Heart left ventricle (tissue), 16 donors: ENCODE measurements at regions of chr14 and their contacts with region 1.

Region 1: GRCh38 chr14:92039719-92040430 is at the start of gene TRIP11:
- DNase-seq: peak; percentile 92 to 96 (median 96)
- ATAC-seq: peak; percentile 98 to 99 (median 98)
- H3K4me3 ChIP-seq: peak within 1 kb of the TSS; percentile 58 to 98 (median 84)
- H3K27ac ChIP-seq: peak within 1 kb of the TSS; percentile 90 to 99 (median 96)
- H3K4me1 ChIP-seq: peaks cover 0 to 48% (median 34%) of the 10 kb centered on the region in 12 donors
- H3K27me3 ChIP-seq: no peaks in the 10 kb centered on the region
- CTCF ChIP-seq: peak in 1 of 12 donors; percentile 13
- POLR2A ChIP-seq: peak in 1 of 2 donors; percentile 56
- total RNA-seq, gene TRIP11: 24.7 to 68.6 (median 55.4) TPM

Region 2: GRCh38 chr14:92093320-92093719 is 53.4 kb after region 1 on chr14:
- intact Hi-C with region 1: loop called in 1 of 10 experiments (anchors 10 kb)
- DNase-seq: no peak
- ATAC-seq: no peak
- H3K4me3 ChIP-seq: no peak overlapping the region
- H3K27ac ChIP-seq: no peak overlapping the region
- H3K4me1 ChIP-seq: no peaks in the 10 kb centered on the region
- H3K27me3 ChIP-seq: no peaks in the 10 kb centered on the region
- CTCF ChIP-seq: peak in 3 of 12 donors; percentile 8 to 17 (median 8)
- POLR2A ChIP-seq: no peak

Region 3: GRCh38 chr14:92106143-92106926 is 66.5 kb after region 1 on chr14 and contains the start of gene ATXN3:
- intact Hi-C with region 1: loop called in 4 of 10 experiments (anchors 5 kb)
- DNase-seq: peak; percentile 97 to 99 (median 98)
- ATAC-seq: peak; percentile 96 to 97 (median 96)
- H3K4me3 ChIP-seq: peak within 1 kb of the TSS; percentile 66 to 98 (median 90)
- H3K27ac ChIP-seq: peak within 1 kb of the TSS; percentile 89 to 100 (median 96)
- H3K4me1 ChIP-seq: peaks cover 0 to 38% (median 22%) of the 10 kb centered on the region in 12 donors
- H3K27me3 ChIP-seq: no peaks in the 10 kb centered on the region
- CTCF ChIP-seq: peak; percentile 58 to 90 (median 76)
- POLR2A ChIP-seq: peak in 1 of 2 donors; percentile 56
- total RNA-seq, gene ATXN3: 11.0 to 27.1 (median 16.3) TPM